GM12878 (cell line): ENCODE measurements at regions of chr12 and their contacts with region 1.

Region 1: GRCh38 chr12:54053751-54054741 is at the start of gene HOXC4:
- DNase-seq: no peak
- ATAC-seq: peak; percentile 86
- H3K4me3 ChIP-seq: peak within 1 kb of the TSS; percentile 84
- H3K27ac ChIP-seq: peak within 1 kb of the TSS; percentile 89
- H3K4me1 ChIP-seq: peaks cover 22% of the 10 kb centered on the region
- H3K27me3 ChIP-seq: no peaks in the 10 kb centered on the region
- CTCF ChIP-seq: no peak
- EP300 ChIP-seq: no peak
- POLR2A ChIP-seq: no peak; the same call in 1 of the 2 replicates
- RAD21 ChIP-seq: no peak
- polyA plus RNA-seq, gene HOXC4: 1.0 to 1.8 TPM

Region 2: GRCh38 chr12:54024127-54024526 is 29.9 kb before region 1 on chr12:
- CTCF ChIA-PET with region 1: interaction called, 15 read pairs
- POLR2A ChIA-PET with region 1: interaction called, 7 read pairs
- RAD21 ChIA-PET with region 1: interaction called, 4 read pairs
- SMC1A ChIA-PET with region 1: interaction called, 8 read pairs
- in situ Hi-C with region 1: no loop called
- intact Hi-C with region 1: no loop called
- DNase-seq: no peak
- ATAC-seq: no peak
- H3K4me3 ChIP-seq: no peak overlapping the region
- H3K27ac ChIP-seq: no peak overlapping the region
- H3K4me1 ChIP-seq: peaks cover 16% of the 10 kb centered on the region
- H3K27me3 ChIP-seq: peaks cover 5 to 10% of the 10 kb centered on the region in 2 experiments
- CTCF ChIP-seq: no peak
- EP300 ChIP-seq: no peak
- POLR2A ChIP-seq: no peak
- RAD21 ChIP-seq: no peak

Region 3: DNA sequence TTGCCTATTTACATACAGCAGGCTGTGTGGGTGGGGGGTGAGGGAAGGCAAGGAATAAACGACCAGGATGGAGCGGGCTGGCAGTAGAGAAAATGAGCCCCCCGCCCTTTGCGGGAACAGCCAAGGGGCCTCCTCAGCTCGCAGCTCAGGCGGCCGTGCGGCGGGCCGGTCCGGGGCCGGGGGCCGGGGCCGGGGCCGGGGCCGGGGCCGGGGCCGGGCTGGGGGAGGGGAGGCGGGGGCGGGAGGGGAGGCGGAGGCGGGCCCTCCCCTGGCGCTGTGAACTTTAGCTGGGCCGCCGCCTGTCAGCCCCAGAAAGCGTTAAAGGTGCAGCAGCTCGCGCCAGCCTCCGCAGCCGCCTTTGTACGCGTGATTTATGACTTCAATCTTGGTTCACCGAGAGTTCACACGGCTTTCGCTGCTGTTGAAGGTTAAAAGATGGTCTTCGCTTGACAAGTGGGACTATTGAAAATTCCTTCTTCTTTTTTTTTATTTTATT is 28.4 kb after region 1 on chr12:
- CTCF ChIA-PET with region 1: interaction called, 11 read pairs
- POLR2A ChIA-PET with region 1: interaction called, 4 read pairs
- RAD21 ChIA-PET with region 1: interaction called, 12 read pairs
- SMC1A ChIA-PET with region 1: interaction called, 4 read pairs
- in situ Hi-C with region 1: no loop called
- intact Hi-C with region 1: no loop called
- DNase-seq: no peak
- ATAC-seq: no peak
- H3K4me3 ChIP-seq: peak overlapping the region; percentile 70
- H3K27ac ChIP-seq: peak overlapping the region; percentile 35
- H3K4me1 ChIP-seq: no peaks in the 10 kb centered on the region
- H3K27me3 ChIP-seq: no peaks in the 10 kb centered on the region
- CTCF ChIP-seq: no peak
- EP300 ChIP-seq: no peak
- POLR2A ChIP-seq: 0 out of 2 replicates have a peak, but pooled peaks have one; percentile 26
- RAD21 ChIP-seq: no peak

Region 4: DNA sequence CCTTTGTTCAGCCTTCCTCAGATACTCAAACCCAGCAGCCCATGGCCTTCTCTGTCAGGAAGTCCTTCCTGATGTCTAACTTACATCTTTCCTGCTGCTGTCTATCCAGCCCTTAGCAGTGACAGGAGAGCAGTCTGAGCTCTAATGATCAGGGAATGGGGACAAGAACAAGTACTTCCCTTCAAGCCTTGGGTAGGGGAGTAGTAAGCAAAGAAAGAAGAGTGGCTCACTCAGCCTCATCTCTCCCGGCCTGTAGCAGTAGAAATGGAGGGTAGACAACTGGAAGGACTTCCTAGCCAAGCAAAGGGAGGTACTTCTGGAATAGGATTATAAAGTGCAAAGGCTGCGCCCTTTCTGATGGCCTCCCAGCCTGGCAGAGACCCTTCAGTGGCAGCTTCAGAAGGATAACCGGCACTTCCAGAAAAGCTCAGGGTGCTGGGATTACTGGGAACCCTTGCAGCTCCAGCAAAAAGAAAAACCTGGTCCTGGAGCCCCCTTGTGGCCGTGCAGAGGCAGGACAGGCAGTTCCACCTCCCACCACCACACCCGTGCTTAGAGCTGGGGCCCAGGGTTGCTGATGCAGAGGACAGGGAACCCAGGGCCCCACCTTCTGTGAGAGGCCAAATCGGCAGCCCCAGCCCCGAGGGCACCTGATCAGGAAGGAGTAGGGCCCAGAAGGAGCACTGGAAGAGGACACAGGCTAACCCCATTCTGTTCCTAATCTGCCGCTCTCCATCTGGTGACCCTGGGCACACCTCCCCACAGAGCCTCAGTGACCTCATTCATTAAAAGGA is 147.2 kb after region 1 on chr12:
- CTCF ChIA-PET with region 1: interaction called, 15 read pairs
- POLR2A ChIA-PET with region 1: interaction called, 4 read pairs
- RAD21 ChIA-PET with region 1: interaction called, 4 read pairs
- SMC1A ChIA-PET with region 1: interaction called, 3 read pairs
- in situ Hi-C with region 1: no loop called
- intact Hi-C with region 1: no loop called
- DNase-seq: no peak
- ATAC-seq: peak; percentile 97
- H3K4me3 ChIP-seq: no peak overlapping the region
- H3K27ac ChIP-seq: no peak overlapping the region
- H3K4me1 ChIP-seq: peaks cover 15% of the 10 kb centered on the region
- H3K27me3 ChIP-seq: peaks cover 0 to 2% of the 10 kb centered on the region in 2 experiments; a peak in 3 of 4 replicates
- CTCF ChIP-seq: peak; percentile 93 to 98 (median 96)
- EP300 ChIP-seq: no peak
- POLR2A ChIP-seq: no peak
- RAD21 ChIP-seq: peak; percentile 68